ENCODE measurements at regions of chr11 and their contacts with region 1.

Region 1: GRCh38 chr11:20110908-20111669 is 49.2 kb downstream of the DBX1 start:
- DNase-seq: peak; percentile 82
- H3K4me3 Mint-ChIP-seq: peak overlapping the region; percentile 57
- H3K27ac Mint-ChIP-seq: peak overlapping the region; percentile 64
- H3K4me1 Mint-ChIP-seq: peaks cover 50% of the 10 kb centered on the region
- H3K27me3 Mint-ChIP-seq: no peaks in the 10 kb centered on the region
- CTCF ChIP-seq: peak; percentile 89

Region 2: DNA sequence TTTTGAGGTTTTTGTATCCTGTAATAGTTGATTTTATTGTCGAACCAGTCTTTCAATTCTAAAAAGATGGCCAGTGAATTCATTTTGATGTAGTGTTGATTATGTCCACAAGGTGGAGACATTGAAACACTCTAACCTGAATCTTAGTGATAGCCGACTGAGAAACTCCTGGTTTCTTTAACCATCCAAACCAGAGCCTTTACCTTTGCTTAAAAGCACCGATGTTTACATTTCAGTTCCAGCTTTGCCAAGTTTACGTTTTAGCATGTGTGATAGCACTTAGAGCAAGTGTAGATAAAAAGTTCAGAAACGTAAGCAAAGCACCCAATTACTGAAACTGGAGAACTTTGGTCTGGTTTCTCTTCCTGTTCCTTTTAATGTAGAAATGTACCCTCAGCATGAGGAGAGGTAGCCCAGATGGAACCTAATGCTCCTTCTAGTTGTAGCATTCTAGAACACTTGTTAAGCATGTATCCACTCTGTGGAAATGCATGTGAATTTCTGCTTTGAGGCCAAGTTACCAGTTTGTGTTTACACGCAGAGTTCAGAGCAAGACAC is 159.5 kb before region 1 on chr11:
- CTCF ChIA-PET with region 1: interaction called, 98 read pairs
- POLR2A ChIA-PET with region 1: interaction called, 46 read pairs
- intact Hi-C with region 1: loop called (anchors 1 kb)
- DNase-seq: peak; percentile 76
- H3K4me3 Mint-ChIP-seq: peak overlapping the region; percentile 28
- H3K27ac Mint-ChIP-seq: peak overlapping the region; percentile 64
- H3K4me1 Mint-ChIP-seq: peaks cover 41% of the 10 kb centered on the region
- H3K27me3 Mint-ChIP-seq: no peaks in the 10 kb centered on the region
- CTCF ChIP-seq: peak; percentile 60

Region 3: DNA sequence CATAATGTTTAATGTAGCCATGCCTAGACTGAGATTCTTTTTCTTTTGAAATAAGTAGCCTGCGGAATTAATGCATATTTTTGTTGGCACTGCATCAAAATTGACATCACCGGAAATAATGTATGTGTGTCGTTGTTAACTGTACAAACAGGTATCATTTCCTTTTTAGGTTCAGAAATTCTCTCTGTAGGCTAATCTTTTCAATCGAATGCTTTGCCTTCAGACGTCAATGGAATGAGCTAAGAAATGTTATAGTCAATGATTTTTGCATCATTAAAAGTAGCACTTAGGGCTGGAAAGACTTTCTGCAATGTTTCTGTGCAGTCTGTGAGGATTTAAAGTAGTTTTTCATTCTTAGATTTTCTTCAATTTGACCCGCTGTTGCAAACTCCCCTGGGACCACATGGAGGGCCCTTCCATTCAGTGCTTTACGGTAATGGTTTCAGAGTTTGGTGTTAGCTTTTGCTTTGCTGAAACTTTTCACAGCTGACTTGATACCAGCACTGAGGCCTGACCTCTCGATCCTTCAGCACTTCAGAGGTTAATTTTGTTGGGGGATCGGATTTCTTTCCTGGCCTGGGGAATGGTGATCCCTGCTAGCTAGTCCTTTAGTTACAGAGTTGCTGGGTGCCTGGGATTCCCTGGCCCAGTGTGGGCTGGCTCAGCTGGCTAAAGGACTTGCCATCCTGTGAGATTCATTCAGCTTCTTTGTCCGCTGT is 88.6 kb before region 1 on chr11:
- CTCF ChIA-PET with region 1: interaction called, 42 read pairs
- POLR2A ChIA-PET with region 1: interaction called, 69 read pairs
- intact Hi-C with region 1: loop called (anchors 2 kb)
- DNase-seq: peak; percentile 77
- H3K4me3 Mint-ChIP-seq: peak overlapping the region; percentile 79
- H3K27ac Mint-ChIP-seq: peak overlapping the region; percentile 85
- H3K4me1 Mint-ChIP-seq: peaks cover 19% of the 10 kb centered on the region
- H3K27me3 Mint-ChIP-seq: no peaks in the 10 kb centered on the region
- CTCF ChIP-seq: no peak

Region 4: DNA sequence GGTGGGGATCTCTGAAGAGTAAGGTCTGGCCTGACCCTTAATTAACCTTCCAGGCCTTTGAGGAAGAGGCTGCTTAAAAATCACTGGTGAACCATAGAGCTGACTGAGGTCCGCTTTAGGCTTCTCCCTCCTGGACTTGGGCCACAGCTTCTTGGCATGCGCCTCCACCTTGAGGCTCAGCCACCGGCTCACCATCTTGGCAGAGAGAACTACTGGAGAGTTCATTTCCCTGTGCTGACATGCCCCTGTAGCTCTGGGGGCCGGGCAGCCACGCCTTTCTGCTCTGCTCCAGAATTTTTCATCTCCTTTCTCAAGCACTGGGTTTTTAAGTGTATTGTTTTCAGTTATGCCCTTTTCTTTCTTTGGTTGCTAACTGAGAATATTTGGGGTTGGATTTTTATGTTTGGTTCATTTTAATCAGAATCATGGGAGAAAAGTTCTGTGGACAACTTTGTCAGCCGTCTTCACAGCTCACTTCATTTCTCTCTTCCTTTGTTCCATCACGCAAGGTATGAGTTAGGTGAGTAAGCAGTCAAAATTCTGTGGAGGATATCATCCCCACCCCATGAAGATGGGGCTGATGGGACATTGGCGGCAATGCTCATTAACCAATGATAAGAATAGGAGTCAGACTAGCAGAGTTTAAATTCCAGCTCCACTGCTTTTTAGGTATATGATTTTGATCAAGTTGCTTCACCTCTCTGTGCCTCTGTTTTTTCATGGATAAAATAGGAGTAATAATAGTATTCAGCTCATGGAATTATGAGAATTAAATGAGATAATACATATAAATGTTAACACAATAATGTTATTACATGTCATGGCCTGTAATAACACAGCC is 54.8 kb before region 1 on chr11:
- CTCF ChIA-PET with region 1: interaction called, 53 read pairs
- POLR2A ChIA-PET with region 1: interaction called, 95 read pairs
- intact Hi-C with region 1: no loop called
- DNase-seq: peak; percentile 92
- H3K4me3 Mint-ChIP-seq: peak overlapping the region; percentile 26
- H3K27ac Mint-ChIP-seq: peak overlapping the region; percentile 90
- H3K4me1 Mint-ChIP-seq: peaks cover 67% of the 10 kb centered on the region
- H3K27me3 Mint-ChIP-seq: no peaks in the 10 kb centered on the region
- CTCF ChIP-seq: no peak

Region 5: GRCh38 chr11:20097319-20098221 is 13.5 kb before region 1 on chr11:
- CTCF ChIA-PET with region 1: interaction called, 10 read pairs
- POLR2A ChIA-PET with region 1: interaction called, 8 read pairs
- intact Hi-C with region 1: no loop called
- DNase-seq: no peak
- H3K4me3 Mint-ChIP-seq: no peak overlapping the region
- H3K27ac Mint-ChIP-seq: no peak overlapping the region
- H3K4me1 Mint-ChIP-seq: peaks cover 5% of the 10 kb centered on the region
- H3K27me3 Mint-ChIP-seq: no peaks in the 10 kb centered on the region
- CTCF ChIP-seq: no peak

Region 6: GRCh38 chr11:20156280-20156875 is 45.3 kb after region 1 on chr11:
- CTCF ChIA-PET with region 1: no interaction called
- POLR2A ChIA-PET with region 1: no interaction called
- intact Hi-C with region 1: no loop called
- DNase-seq: no peak
- H3K4me3 Mint-ChIP-seq: no peak overlapping the region
- H3K27ac Mint-ChIP-seq: no peak overlapping the region
- H3K4me1 Mint-ChIP-seq: peaks cover 4% of the 10 kb centered on the region
- H3K27me3 Mint-ChIP-seq: peaks cover 75% of the 10 kb centered on the region
- CTCF ChIP-seq: no peak

Region 7: GRCh38 chr11:20226933-20227332 is 115.8 kb after region 1 on chr11:
- CTCF ChIA-PET with region 1: no interaction called
- POLR2A ChIA-PET with region 1: no interaction called
- intact Hi-C with region 1: no loop called
- DNase-seq: peak; percentile 29
- H3K4me3 Mint-ChIP-seq: no peak overlapping the region
- H3K27ac Mint-ChIP-seq: no peak overlapping the region
- H3K4me1 Mint-ChIP-seq: no peaks in the 10 kb centered on the region
- H3K27me3 Mint-ChIP-seq: peaks cover 68% of the 10 kb centered on the region
- CTCF ChIP-seq: no peak

Region 8: DNA sequence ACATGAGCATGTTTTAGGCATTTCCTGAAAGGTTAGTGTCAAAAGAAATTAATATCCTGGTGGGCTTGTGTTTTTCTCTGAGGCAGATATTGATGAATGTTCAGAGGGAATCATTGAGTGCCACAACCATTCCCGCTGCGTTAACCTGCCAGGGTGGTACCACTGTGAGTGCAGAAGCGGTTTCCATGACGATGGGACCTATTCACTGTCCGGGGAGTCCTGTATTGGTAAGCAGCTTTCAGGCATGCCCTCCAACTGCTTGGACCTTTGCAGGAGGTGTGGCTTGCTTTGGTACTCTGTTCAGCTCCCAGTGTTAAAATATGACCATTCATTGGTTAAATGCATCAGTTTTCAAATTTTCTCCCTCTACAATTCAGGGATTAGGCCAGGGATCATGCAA is 1423.2 kb after region 1 on chr11:
- CTCF ChIA-PET with region 1: no interaction called
- POLR2A ChIA-PET with region 1: no interaction called
- intact Hi-C with region 1: no loop called
- DNase-seq: no peak
- H3K4me3 Mint-ChIP-seq: no peak overlapping the region
- H3K27ac Mint-ChIP-seq: no peak overlapping the region
- H3K4me1 Mint-ChIP-seq: no peaks in the 10 kb centered on the region
- H3K27me3 Mint-ChIP-seq: no peaks in the 10 kb centered on the region
- CTCF ChIP-seq: no peak

Measured in MCF 10A (cell line).